ENCODE measurements at regions of chr6 and their contacts with region 1.

Region 1: GRCh38 chr6:36594029-36594815 is at the start of gene SRSF3:
- DNase-seq: peak; percentile 98
- ATAC-seq: peak; percentile 92
- H3K4me3 Mint-ChIP-seq: peak within 1 kb of the TSS; percentile 88
- H3K27ac Mint-ChIP-seq: peak within 1 kb of the TSS; percentile 99
- H3K4me1 Mint-ChIP-seq: peaks cover 21% of the 10 kb centered on the region
- H3K27me3 Mint-ChIP-seq: no peaks in the 10 kb centered on the region
- total RNA-seq, gene SRSF3: 298 to 464 TPM

Region 2: DNA sequence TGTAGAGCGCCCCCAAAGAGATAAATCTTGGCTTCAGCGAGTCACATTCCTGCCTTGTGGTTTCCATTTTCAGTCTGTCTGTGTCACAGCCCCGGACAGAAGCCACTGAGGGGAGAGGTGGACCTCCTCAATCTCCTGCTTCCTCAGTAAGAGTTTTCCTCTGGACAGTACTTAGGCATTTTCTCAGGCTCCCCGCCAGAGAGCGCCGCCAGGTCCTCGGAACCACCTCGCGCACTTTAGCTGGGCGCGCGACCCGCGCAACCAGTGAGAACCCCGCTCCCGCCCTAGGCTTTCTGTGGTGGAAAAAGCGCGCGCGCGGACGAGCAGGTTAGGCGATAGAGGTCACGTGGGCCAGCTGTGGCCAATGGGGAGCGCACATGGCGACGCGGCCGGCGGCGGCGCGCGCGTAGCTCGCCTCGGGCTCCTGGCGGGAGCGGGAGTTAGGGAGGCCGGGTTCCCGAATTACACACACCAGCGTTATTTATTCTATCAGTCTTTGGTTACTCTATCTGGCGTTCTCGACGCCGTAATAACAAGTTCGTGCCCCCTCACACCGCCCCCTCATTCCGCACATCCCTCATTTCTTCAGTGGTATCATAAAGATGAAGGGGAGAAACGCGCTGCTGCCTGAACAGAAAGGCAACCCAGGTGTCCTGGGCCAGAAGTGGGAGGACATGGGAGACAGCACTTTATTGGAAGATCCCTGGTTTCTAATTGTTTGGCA is 171.0 kb before region 1 on chr6:
- CTCF ChIA-PET with region 1: interaction called, 7 read pairs
- POLR2A ChIA-PET with region 1: interaction called, 3 read pairs
- intact Hi-C with region 1: loop called (anchors 1 kb)
- DNase-seq: peak; percentile 99
- ATAC-seq: peak; percentile 97
- H3K4me3 Mint-ChIP-seq: peak overlapping the region; percentile 83
- H3K27ac Mint-ChIP-seq: peak overlapping the region; percentile 92
- H3K4me1 Mint-ChIP-seq: peaks cover 17% of the 10 kb centered on the region
- H3K27me3 Mint-ChIP-seq: no peaks in the 10 kb centered on the region

Region 3: GRCh38 chr6:36546920-36547645 is 47.1 kb before region 1 on chr6 and contains the start of gene STK38:
- CTCF ChIA-PET with region 1: no interaction called
- POLR2A ChIA-PET with region 1: interaction called, 6 read pairs
- intact Hi-C with region 1: loop called (anchors 1 to 2 kb)
- DNase-seq: peak; percentile 97
- ATAC-seq: peak; percentile 90
- H3K4me3 Mint-ChIP-seq: peak within 1 kb of the TSS; percentile 94
- H3K27ac Mint-ChIP-seq: peak within 1 kb of the TSS; percentile 97
- H3K4me1 Mint-ChIP-seq: peaks cover 36% of the 10 kb centered on the region
- H3K27me3 Mint-ChIP-seq: no peaks in the 10 kb centered on the region
- total RNA-seq, gene STK38: 24.0 to 27.0 TPM

Region 4: DNA sequence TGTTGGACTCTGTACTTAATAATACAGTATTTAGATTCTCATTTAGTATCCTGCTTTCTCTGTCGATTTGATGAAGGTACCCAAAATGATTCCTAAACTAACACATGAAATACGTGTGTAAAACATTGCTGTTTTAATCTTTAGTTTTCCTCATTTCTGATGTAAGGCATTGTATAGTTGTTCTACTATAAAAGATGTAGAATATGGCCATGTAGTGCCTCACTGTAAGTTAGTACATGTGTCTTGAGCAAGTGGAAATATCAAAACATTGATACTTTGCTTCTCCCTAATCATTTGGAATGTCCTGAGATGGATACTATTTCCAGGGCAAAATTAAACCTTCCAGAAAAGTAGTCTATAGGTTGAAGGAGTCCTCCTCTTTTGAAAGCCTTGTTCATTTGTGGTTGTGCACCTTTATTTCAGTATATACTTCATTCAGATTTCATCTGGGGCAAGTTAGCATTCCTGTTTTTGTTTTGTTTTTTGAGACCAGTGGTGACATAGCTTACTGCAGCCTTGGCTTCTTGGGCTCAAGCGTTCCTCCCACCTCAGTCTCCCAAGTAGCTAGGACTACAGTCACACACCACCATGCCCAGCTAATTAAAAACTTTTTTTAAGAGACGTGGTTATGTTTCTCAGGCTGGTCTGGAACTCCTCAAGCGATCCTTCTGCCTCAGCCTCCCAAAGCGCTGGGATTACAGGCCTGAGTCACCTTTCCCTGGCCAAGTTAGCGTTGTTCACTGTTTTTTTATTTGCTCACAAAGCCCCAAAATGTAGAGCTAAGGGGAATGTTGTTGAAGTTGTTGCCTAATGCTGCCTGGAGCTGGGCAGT is 11.6 kb after region 1 on chr6:
- CTCF ChIA-PET with region 1: interaction called, 17 read pairs
- POLR2A ChIA-PET with region 1: interaction called, 38 read pairs
- intact Hi-C with region 1: no loop called
- DNase-seq: no peak
- ATAC-seq: no peak
- H3K4me3 Mint-ChIP-seq: no peak overlapping the region
- H3K27ac Mint-ChIP-seq: peak overlapping the region; percentile 9
- H3K4me1 Mint-ChIP-seq: peaks cover 75% of the 10 kb centered on the region
- H3K27me3 Mint-ChIP-seq: no peaks in the 10 kb centered on the region

Region 5: GRCh38 chr6:36743538-36744303 is 149.5 kb after region 1 on chr6:
- CTCF ChIA-PET with region 1: no interaction called
- POLR2A ChIA-PET with region 1: no interaction called
- intact Hi-C with region 1: no loop called
- DNase-seq: no peak
- ATAC-seq: no peak
- H3K4me3 Mint-ChIP-seq: no peak overlapping the region
- H3K27ac Mint-ChIP-seq: no peak overlapping the region
- H3K4me1 Mint-ChIP-seq: peaks cover 2% of the 10 kb centered on the region
- H3K27me3 Mint-ChIP-seq: no peaks in the 10 kb centered on the region

Region 6: GRCh38 chr6:36765190-36765589 is 171.0 kb after region 1 on chr6:
- CTCF ChIA-PET with region 1: no interaction called
- POLR2A ChIA-PET with region 1: no interaction called
- intact Hi-C with region 1: no loop called
- DNase-seq: no peak
- ATAC-seq: no peak
- H3K4me3 Mint-ChIP-seq: no peak overlapping the region
- H3K27ac Mint-ChIP-seq: no peak overlapping the region
- H3K4me1 Mint-ChIP-seq: peaks cover 20% of the 10 kb centered on the region
- H3K27me3 Mint-ChIP-seq: peaks cover 3% of the 10 kb centered on the region

Region 7: GRCh38 chr6:36985808-36986703 is 391.8 kb after region 1 on chr6 and contains the start of gene MTCH1:
- CTCF ChIA-PET with region 1: no interaction called
- POLR2A ChIA-PET with region 1: no interaction called
- intact Hi-C with region 1: loop called in 1 of 2 experiments (anchors 1 kb)
- DNase-seq: peak; percentile 93
- ATAC-seq: peak; percentile 80
- H3K4me3 Mint-ChIP-seq: no peak within 1 kb of the TSS
- H3K27ac Mint-ChIP-seq: peak within 1 kb of the TSS; percentile 95
- H3K4me1 Mint-ChIP-seq: peaks cover 18% of the 10 kb centered on the region
- H3K27me3 Mint-ChIP-seq: no peaks in the 10 kb centered on the region
- total RNA-seq, gene MTCH1: 72.9 to 92.9 TPM